ENCODE measurements at regions of chr17 and their contacts with region 1.

Region 1: GRCh38 chr17:4004517-4005295 is 40.5 kb upstream of the ATP2A3 start:
- DNase-seq: no peak
- H3K4me3 ChIP-seq: no peak overlapping the region
- H3K27ac ChIP-seq: no peak overlapping the region
- H3K4me1 ChIP-seq: peaks cover 12% of the 10 kb centered on the region; the same call in 1 of the 2 replicates
- H3K27me3 ChIP-seq: no peaks in the 10 kb centered on the region
- CTCF ChIP-seq: peak; percentile 64

Region 2: DNA sequence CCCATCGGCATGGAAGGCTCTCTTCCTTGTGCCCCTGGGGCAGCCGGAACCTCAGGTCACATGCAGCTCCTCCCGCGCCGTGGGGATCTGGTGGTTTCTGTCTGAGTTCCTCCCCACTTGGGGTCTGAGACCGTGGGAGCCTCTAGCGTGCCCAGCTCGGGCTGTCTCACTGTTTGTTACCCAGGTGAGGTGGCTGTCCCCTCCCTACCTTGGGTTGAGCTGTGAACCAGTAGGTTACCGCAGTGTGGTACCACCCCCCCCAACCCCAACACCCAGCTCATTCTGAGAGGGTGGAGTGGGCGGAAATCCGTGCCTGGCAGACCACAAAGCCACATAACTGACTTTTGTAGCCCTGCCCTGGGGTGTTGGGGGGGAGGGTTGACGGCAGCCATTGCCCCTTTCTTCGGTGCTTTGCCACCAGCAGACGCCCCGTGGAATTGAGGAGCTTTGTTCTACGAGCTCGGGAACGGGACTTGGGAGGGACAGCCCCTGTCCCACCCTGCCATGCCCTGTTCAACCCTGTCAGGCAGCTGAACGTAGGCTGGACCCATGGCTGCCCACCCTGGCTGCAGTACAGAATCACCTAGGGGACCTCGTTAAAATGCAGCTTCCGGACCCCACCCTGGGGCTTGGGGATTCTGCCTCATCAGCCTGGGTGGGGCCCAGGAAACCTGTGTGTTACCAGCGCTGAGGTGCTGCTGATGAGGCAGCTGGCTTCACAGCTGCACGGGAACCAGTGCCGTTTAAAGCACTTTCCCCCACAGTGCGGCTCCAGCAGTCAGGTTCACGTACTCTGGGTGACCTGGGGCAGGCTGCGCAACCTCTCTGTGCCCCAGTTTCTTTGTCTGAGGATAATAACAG is 1190.0 kb before region 1 on chr17:
- CTCF ChIA-PET with region 1: no interaction called
- POLR2A ChIA-PET with region 1: no interaction called
- intact Hi-C with region 1: no loop called
- DNase-seq: peak in 1 of 2 experiments; percentile 35
- H3K4me3 ChIP-seq: no peak overlapping the region
- H3K27ac ChIP-seq: no peak overlapping the region
- H3K4me1 ChIP-seq: peaks cover 20% of the 10 kb centered on the region
- H3K27me3 ChIP-seq: no peaks in the 10 kb centered on the region
- CTCF ChIP-seq: no peak

Region 3: DNA sequence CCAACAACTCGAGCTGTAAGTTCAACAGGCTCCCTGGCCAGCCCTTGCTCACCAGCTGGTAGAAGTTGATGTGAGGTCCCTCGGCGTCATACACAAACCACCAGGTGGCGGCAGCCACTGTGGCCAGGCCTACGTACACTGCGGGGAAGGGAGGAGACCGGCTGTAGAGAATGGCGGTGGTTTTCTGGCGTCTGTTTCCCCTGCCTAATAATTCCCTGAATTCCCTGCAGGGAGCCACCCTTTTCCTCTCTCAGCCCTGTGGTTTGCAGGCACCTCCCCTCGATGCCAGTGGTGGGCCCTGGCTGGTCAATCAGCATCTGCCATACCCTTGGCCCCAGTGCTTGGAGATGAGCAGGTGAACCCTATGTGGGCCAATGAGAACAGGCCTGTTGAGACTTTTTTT is 69.6 kb before region 1 on chr17:
- CTCF ChIA-PET with region 1: interaction called, 18 read pairs
- POLR2A ChIA-PET with region 1: no interaction called
- intact Hi-C with region 1: loop called (anchors 10 kb)
- DNase-seq: peak; percentile 61 to 77
- H3K4me3 ChIP-seq: no peak overlapping the region
- H3K27ac ChIP-seq: no peak overlapping the region
- H3K4me1 ChIP-seq: no peaks in the 10 kb centered on the region
- H3K27me3 ChIP-seq: no peaks in the 10 kb centered on the region
- CTCF ChIP-seq: peak; percentile 78

Region 4: DNA sequence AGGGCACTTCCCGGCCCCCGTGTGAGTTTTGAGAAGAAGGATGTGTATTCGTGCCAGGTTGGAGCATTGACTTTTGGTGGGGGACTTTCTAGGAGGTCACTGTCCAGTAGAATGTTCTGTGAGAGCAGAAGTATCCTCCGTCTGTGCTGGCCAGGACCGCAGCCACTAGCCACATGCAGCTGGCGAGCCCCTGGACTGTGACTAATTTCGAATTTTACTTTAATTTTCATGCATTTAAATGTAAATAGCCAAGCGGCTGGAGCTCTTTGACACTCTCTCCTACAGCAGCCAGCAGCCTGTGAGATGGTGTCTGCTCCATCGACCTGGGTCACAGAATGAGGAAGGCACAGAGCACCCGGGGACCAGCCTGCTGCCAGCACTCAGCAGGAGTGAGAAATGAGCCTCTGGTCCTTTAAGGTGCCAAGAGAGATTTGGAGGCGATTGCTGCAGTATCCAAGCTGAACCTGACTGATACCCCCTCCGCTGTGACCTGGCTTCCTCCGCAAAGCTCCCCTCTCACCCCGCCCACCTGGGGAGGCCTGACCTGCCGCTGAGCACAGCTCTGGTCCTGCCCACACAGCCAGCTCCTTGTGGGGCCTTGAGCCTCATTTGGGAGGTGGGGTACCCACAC is 48.3 kb before region 1 on chr17:
- CTCF ChIA-PET with region 1: no interaction called
- POLR2A ChIA-PET with region 1: no interaction called
- intact Hi-C with region 1: no loop called
- DNase-seq: no peak
- H3K4me3 ChIP-seq: no peak overlapping the region
- H3K27ac ChIP-seq: no peak overlapping the region
- H3K4me1 ChIP-seq: peaks cover 20% of the 10 kb centered on the region
- H3K27me3 ChIP-seq: no peaks in the 10 kb centered on the region
- CTCF ChIP-seq: no peak

Region 5: GRCh38 chr17:3972281-3972731 is 32.4 kb before region 1 on chr17:
- CTCF ChIA-PET with region 1: no interaction called
- POLR2A ChIA-PET with region 1: no interaction called
- intact Hi-C with region 1: no loop called
- DNase-seq: no peak
- H3K4me3 ChIP-seq: no peak overlapping the region
- H3K27ac ChIP-seq: no peak overlapping the region
- H3K4me1 ChIP-seq: no peaks in the 10 kb centered on the region
- H3K27me3 ChIP-seq: no peaks in the 10 kb centered on the region
- CTCF ChIP-seq: no peak

Region 6: DNA sequence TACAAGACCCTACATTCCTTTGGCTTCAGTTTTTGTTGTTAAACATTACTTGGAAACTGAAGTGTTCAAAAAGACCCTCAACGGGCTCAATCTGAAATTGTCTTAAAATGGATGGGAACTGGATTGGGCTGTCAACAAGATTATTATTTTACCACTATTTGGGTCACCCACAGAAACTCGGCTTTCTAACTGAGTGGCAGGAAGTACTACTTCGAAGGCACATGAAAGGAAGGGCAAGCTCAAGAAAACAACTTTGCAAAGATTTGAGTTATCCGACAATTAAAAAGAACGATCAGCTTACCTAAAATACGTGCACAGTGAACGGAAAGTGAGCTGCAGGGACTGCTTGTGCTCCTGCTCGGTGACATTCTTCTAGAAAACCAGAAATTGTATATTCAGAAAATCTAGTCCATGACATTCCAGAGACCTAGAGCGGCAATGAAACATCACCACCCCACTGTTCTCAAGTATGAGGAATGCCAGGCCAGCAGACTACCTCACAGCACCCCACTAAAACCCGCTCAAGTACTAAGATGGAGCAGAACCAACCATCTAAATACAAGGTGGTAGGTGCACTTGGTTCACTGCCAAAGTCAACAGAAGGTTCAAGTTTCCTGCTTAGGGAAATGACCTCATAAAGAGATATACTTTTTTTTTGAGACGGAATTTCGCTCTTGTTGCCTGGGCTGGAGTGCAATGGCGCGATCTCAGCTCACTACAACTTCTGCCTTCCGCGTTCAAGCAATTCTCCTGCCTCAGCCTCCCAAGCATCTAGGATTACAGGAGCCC is 77.6 kb after region 1 on chr17:
- CTCF ChIA-PET with region 1: no interaction called
- POLR2A ChIA-PET with region 1: no interaction called
- intact Hi-C with region 1: no loop called
- DNase-seq: no peak
- H3K4me3 ChIP-seq: no peak overlapping the region
- H3K27ac ChIP-seq: no peak overlapping the region
- H3K4me1 ChIP-seq: no peaks in the 10 kb centered on the region
- H3K27me3 ChIP-seq: no peaks in the 10 kb centered on the region
- CTCF ChIP-seq: no peak

Measured in PC-9 (cell line).